Naive thymus-derived CD4-positive, alpha-beta T cell (primary cell): ENCODE measurements at regions of chr18 and their contacts with region 1.

Region 1: DNA sequence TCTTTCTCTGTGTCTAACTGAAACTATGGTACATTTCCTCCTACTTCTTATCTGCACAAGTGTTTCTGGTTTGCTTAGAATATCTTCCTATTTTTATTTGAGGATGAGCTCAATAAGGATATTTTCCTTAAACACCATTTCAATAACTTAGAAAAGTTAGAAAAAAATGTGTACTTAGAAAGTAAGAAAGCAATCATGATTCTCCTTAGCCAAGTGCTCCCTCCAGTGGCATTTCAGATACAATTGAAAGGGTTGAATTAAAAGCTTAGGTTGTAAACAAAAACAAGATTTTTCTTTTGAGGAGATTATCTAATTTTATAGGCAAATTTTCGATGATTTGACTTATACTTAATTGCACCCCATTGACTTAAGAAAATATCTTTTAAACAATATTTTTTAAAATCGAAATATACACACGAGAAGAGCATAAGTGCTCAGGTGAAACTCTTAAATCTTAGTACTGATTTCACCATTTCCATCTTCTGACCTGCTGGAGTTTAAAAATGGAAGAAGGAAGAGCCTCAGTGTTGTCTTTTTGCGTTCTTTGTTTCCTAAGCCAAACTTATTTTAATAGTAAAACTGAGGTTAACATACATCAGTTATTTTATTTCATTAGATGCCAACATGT is 26.9 kb downstream of the C18orf63 start:
- DNase-seq: peak in 7 of 9 donors; percentile 11 to 59 (median 38)
- ATAC-seq: peak; percentile 49
- H3K4me3 ChIP-seq: no peak overlapping the region
- H3K4me3 Mint-ChIP-seq: no peak overlapping the region
- H3K27ac ChIP-seq: no peak overlapping the region
- H3K27ac Mint-ChIP-seq: no peak overlapping the region
- H3K4me1 ChIP-seq: no peaks in the 10 kb centered on the region
- H3K4me1 Mint-ChIP-seq: no peaks in the 10 kb centered on the region
- H3K27me3 ChIP-seq: no peaks in the 10 kb centered on the region
- H3K27me3 Mint-ChIP-seq: peaks cover 2 to 39% (median 4%) of the 10 kb centered on the region in 5 donors

Region 2: DNA sequence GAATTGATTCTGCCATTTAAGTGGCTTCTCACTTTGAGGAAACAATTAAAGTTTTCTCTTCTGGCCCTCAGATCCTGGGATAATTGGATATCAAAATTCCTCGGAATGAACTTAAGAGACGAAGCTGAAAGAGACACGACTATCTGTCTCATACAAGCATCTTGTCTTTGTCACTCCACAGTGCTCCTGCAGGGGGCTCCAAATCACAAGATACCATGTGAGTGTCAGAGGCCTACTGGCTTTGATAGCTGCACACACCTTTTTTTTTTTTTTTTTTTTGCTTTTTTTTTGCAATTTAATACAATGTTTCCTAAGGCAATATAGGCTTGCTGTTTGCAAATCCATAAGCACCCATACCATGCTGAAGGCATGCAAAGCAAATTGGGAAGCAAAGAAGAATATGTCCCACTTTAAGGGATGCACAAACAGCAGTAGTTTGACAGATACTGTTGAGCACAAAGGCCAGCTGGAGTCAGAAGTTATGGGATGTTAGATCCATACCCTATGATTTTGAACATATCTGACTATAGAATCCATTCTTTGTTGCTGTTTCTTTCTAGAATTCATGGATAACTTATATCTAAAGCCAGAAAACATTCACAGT is 1689.4 kb before region 1 on chr18:
- CTCF ChIA-PET with region 1: no interaction called
- POLR2A ChIA-PET with region 1: no interaction called
- intact Hi-C with region 1: loop called in 1 of 2 experiments (anchors 10 kb)
- DNase-seq: peak in 4 of 9 donors; percentile 3 to 22 (median 6)
- ATAC-seq: peak; percentile 46
- H3K4me3 ChIP-seq: no peak overlapping the region
- H3K4me3 Mint-ChIP-seq: no peak overlapping the region
- H3K27ac ChIP-seq: no peak overlapping the region
- H3K27ac Mint-ChIP-seq: no peak overlapping the region
- H3K4me1 ChIP-seq: no peaks in the 10 kb centered on the region
- H3K4me1 Mint-ChIP-seq: no peaks in the 10 kb centered on the region
- H3K27me3 ChIP-seq: no peaks in the 10 kb centered on the region
- H3K27me3 Mint-ChIP-seq: peaks cover 0 to 7% (median 0%) of the 10 kb centered on the region in 5 donors

Region 3: GRCh38 chr18:74040459-74041332 is 301.8 kb before region 1 on chr18:
- CTCF ChIA-PET with region 1: interaction called, 5 read pairs
- POLR2A ChIA-PET with region 1: no interaction called
- intact Hi-C with region 1: loop called in 1 of 2 experiments (anchors 1 kb)
- DNase-seq: peak; percentile 32 to 81 (median 62)
- ATAC-seq: peak; percentile 68
- H3K4me3 ChIP-seq: no peak overlapping the region
- H3K4me3 Mint-ChIP-seq: no peak overlapping the region
- H3K27ac ChIP-seq: no peak overlapping the region
- H3K27ac Mint-ChIP-seq: no peak overlapping the region
- H3K4me1 ChIP-seq: no peaks in the 10 kb centered on the region
- H3K4me1 Mint-ChIP-seq: peaks cover 0 to 5% (median 0%) of the 10 kb centered on the region in 7 donors
- H3K27me3 ChIP-seq: no peaks in the 10 kb centered on the region
- H3K27me3 Mint-ChIP-seq: no peaks in the 10 kb centered on the region

Region 4: GRCh38 chr18:74147779-74148542 is 194.6 kb before region 1 on chr18 and contains the starts of genes FBXO15 and TIMM21:
- CTCF ChIA-PET with region 1: no interaction called
- POLR2A ChIA-PET with region 1: no interaction called
- intact Hi-C with region 1: loop called in 1 of 2 experiments (anchors 1 kb)
- DNase-seq: peak; percentile 92 to 97 (median 96)
- ATAC-seq: peak; percentile 91
- H3K4me3 ChIP-seq: peak within 1 kb of the TSS; percentile 82
- H3K4me3 Mint-ChIP-seq: peak within 1 kb of the TSS; percentile 95 to 100 (median 97)
- H3K27ac ChIP-seq: peak within 1 kb of the TSS; percentile 92
- H3K27ac Mint-ChIP-seq: peak within 1 kb of the TSS; percentile 98 to 100 (median 99)
- H3K4me1 ChIP-seq: peaks cover 15 to 25% of the 10 kb centered on the region in 2 donors
- H3K4me1 Mint-ChIP-seq: peaks cover 23 to 60% (median 55%) of the 10 kb centered on the region in 7 donors
- H3K27me3 ChIP-seq: no peaks in the 10 kb centered on the region
- H3K27me3 Mint-ChIP-seq: peaks cover 0 to 7% (median 0%) of the 10 kb centered on the region in 5 donors
- total RNA-seq, gene FBXO15: 1.1 to 4.9 (median 1.3) TPM
- total RNA-seq, gene TIMM21: 9.7 to 30.2 (median 27.9) TPM

Region 5: GRCh38 chr18:74196220-74197119 is 146.1 kb before region 1 on chr18:
- CTCF ChIA-PET with region 1: interaction called, 14 read pairs
- POLR2A ChIA-PET with region 1: no interaction called
- intact Hi-C with region 1: loop called (anchors 1 kb)
- DNase-seq: peak in 7 of 9 donors; percentile 51 to 80 (median 71)
- ATAC-seq: peak; percentile 95
- H3K4me3 ChIP-seq: peak overlapping the region; percentile 55
- H3K4me3 Mint-ChIP-seq: peak overlapping the region; percentile 63 to 90 (median 86)
- H3K27ac ChIP-seq: peak overlapping the region; percentile 63
- H3K27ac Mint-ChIP-seq: peak overlapping the region in 8 of 9 donors; percentile 51 to 90 (median 79)
- H3K4me1 ChIP-seq: no peaks in the 10 kb centered on the region
- H3K4me1 Mint-ChIP-seq: peaks cover 0 to 7% (median 0%) of the 10 kb centered on the region in 7 donors
- H3K27me3 ChIP-seq: no peaks in the 10 kb centered on the region
- H3K27me3 Mint-ChIP-seq: peaks cover 1 to 11% (median 2%) of the 10 kb centered on the region in 5 donors

Region 6: GRCh38 chr18:74242438-74243096 is 100.0 kb before region 1 on chr18:
- CTCF ChIA-PET with region 1: no interaction called
- POLR2A ChIA-PET with region 1: no interaction called
- intact Hi-C with region 1: loop called in 1 of 2 experiments (anchors 1 kb)
- DNase-seq: no peak
- ATAC-seq: no peak
- H3K4me3 ChIP-seq: no peak overlapping the region
- H3K4me3 Mint-ChIP-seq: no peak overlapping the region
- H3K27ac ChIP-seq: no peak overlapping the region
- H3K27ac Mint-ChIP-seq: peak overlapping the region in 1 of 9 donors; percentile 51
- H3K4me1 ChIP-seq: no peaks in the 10 kb centered on the region
- H3K4me1 Mint-ChIP-seq: no peaks in the 10 kb centered on the region
- H3K27me3 ChIP-seq: no peaks in the 10 kb centered on the region
- H3K27me3 Mint-ChIP-seq: peaks cover 4 to 24% (median 15%) of the 10 kb centered on the region in 5 donors